WTC11 (cell line): ENCODE measurements at regions of chr1 and their contacts with region 1.

Region 1: GRCh38 chr1:24526940-24527542 is 24.4 kb downstream of the RCAN3 start:
- DNase-seq: no peak
- ATAC-seq: peak; percentile 41; the same call in 1 of the 2 replicates
- H3K4me3 Mint-ChIP-seq: no peak overlapping the region
- H3K27ac Mint-ChIP-seq: no peak overlapping the region
- H3K4me1 Mint-ChIP-seq: no peaks in the 10 kb centered on the region
- H3K27me3 Mint-ChIP-seq: no peaks in the 10 kb centered on the region
- CTCF ChIP-seq: peak; percentile 42

Region 2: DNA sequence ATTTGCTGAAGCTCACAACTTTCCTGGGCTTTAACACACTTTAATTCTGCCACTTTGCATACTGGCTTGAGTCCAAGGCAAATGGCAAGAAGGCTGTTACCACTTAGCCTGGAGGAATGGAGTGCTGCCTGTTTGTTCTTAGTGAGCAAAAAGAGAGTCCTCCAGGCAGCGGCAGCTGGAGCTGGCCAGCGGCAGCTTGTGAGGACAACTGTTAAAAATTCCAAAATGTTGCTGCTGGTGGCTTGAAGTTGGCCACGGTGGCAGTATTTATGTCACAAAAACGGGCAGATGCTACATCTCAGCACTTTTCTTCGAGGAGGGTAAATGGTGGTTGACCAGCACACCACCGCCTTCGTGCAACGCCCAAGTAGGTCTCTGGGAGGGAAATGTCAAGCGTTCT is 140.8 kb before region 1 on chr1:
- CTCF ChIA-PET with region 1: no interaction called
- POLR2A ChIA-PET with region 1: no interaction called
- DNase-seq: no peak
- ATAC-seq: no peak
- H3K4me3 Mint-ChIP-seq: no peak overlapping the region
- H3K27ac Mint-ChIP-seq: no peak overlapping the region
- H3K4me1 Mint-ChIP-seq: peaks cover 2% of the 10 kb centered on the region
- H3K27me3 Mint-ChIP-seq: no peaks in the 10 kb centered on the region; the same call in 1 of the 2 replicates
- CTCF ChIP-seq: no peak

Region 3: DNA sequence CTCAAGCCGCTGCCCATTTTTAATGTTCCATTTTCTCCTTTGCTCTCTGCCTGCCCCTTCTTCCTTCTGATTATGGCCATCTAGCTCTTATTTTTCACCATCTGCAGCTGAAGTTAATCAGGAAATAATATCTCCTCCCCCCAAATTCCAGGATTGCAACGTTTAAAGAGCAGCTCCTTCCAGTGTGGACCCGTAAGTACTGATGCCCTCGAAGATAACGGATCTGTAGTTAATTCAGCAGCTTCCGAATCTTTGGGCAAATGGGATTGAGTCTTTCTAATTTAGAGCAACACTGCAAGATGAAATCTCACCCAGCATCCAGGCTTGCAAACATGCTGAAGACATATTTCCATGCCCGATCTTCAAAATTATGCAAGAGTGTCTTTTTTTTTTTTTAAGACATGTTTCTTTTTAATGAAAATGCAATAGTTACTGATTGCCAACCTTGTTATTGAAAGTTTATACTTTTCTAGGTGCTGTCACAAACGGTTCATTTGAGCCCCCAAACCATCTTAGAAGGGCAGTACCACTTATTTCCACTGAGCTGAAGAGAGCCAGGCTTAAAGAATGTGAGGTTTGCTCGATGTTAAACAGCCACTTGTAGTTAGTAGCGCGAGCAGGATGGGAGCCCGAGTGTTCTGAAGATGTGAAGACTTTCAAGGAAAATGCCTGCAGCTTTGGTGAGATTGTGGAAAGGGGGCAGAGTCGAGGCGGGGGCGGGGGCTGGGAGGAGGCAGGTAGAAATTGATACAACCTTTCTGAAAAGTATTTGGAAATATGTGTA is 35.3 kb before region 1 on chr1:
- CTCF ChIA-PET with region 1: interaction called, 10 read pairs
- POLR2A ChIA-PET with region 1: no interaction called
- DNase-seq: no peak
- ATAC-seq: peak; percentile 76
- H3K4me3 Mint-ChIP-seq: no peak overlapping the region
- H3K27ac Mint-ChIP-seq: no peak overlapping the region
- H3K4me1 Mint-ChIP-seq: peaks cover 5% of the 10 kb centered on the region; the same call in 1 of the 2 replicates
- H3K27me3 Mint-ChIP-seq: peaks cover 7% of the 10 kb centered on the region
- CTCF ChIP-seq: no peak